Panc1 (cell line): ENCODE measurements at regions of chr18 and their contacts with region 1.

Region 1: DNA sequence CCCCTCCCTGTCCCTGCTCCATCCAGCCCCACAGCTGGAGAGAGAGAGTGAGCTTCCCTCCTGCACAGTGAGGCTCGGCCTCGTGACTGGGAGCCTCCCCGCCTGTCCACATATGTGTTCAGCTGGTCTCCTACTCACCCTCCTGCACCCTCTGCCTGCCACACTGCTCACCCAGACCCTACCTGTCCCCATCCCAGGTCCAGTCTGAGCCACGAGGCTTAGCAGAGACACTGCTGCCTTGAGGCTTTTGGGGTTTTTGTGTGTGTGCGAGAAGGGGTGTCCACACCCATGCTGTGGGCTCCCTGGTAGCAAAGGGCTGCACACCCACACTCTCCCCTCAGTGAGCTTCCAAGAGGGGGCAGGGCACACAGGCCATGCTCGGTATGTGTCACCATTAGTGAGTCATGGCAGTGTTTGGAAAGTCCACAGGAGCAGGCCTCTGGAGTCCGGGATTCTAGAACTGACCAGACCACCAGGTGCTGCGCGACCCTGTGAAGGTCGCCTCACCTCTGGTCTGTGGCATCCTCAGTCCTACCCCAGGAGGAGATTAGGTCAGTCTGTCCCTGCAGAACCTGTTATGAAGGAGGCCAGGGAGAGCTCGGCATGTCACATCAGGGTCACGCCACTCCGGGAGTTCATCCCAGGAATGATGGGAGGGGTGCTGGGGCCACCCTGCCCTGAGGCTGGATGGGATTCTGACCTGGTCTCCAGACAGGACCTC is 39.9 kb upstream of the SMAD7 start:
- DNase-seq: no peak
- ATAC-seq: peak; percentile 75
- H3K4me3 ChIP-seq: no peak overlapping the region
- H3K27ac ChIP-seq: peak overlapping the region; percentile 72
- H3K4me1 ChIP-seq: peaks cover 44% of the 10 kb centered on the region
- H3K27me3 ChIP-seq: no peaks in the 10 kb centered on the region
- CTCF ChIP-seq: no peak

Region 2: GRCh38 chr18:48979944-48980890 is 10.4 kb before region 1 on chr18:
- CTCF ChIA-PET with region 1: interaction called, 10 read pairs
- POLR2A ChIA-PET with region 1: no interaction called
- in situ Hi-C with region 1: no loop called
- intact Hi-C with region 1: no loop called
- DNase-seq: no peak
- ATAC-seq: no peak
- H3K4me3 ChIP-seq: no peak overlapping the region
- H3K27ac ChIP-seq: no peak overlapping the region; the same call in 1 of the 2 replicates
- H3K4me1 ChIP-seq: no peaks in the 10 kb centered on the region
- H3K27me3 ChIP-seq: no peaks in the 10 kb centered on the region
- CTCF ChIP-seq: no peak